Gastrocnemius medialis (tissue), 4 donors: ENCODE measurements at regions of chr15 and their contacts with region 1.

Region 1: DNA sequence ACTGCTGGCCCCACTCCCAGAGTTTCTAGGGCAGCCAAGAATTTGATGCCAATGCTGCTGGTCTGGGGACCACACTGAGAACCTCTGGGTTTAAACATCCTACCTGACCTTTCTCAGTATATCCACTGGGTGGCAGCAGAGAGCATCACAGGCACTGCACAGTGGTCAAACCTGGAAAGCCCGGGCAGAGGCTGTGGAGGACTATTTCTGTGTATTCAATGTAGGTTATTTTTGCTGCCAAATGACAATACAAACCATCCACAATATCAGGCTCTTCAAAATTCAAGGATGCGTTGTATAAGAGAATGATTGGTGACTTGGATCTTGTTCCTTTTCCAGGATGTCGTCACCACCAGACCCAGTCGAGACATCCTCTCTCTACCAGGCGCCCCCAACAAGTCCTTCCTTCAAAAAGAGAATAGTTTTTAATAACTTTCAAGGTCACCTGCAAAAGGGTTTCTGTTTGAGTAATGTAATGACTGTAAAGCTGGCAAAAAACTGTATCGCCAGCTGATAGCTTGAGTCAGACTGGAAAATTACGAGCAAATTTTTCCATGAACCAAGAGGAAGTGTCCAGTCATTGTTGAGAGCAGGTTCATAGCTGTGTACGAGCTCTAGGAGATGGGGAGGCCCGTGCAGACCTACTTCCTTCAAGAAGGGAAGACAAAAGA is 30.5 kb upstream of the MYZAP start:
- DNase-seq: peak; percentile 52 to 70
- ATAC-seq: peak; percentile 87 to 96
- H3K4me3 ChIP-seq: no peak overlapping the region
- H3K27ac ChIP-seq: peak overlapping the region in 3 of 4 donors; percentile 38 to 47 (median 41)
- H3K4me1 ChIP-seq: no peaks in the 10 kb centered on the region
- H3K27me3 ChIP-seq: no peaks in the 10 kb centered on the region
- CTCF ChIP-seq: peak; percentile 85 to 93 (median 90)
- POLR2A ChIP-seq: no peak

Region 2: GRCh38 chr15:57635300-57635909 is 74.2 kb after region 1 on chr15:
- in situ Hi-C with region 1: loop called in 1 of 4 experiments (anchors 10 kb)
- intact Hi-C with region 1: loop called (anchors 5 kb)
- DNase-seq: peak; percentile 81 to 83
- ATAC-seq: peak; percentile 92 to 93
- H3K4me3 ChIP-seq: no peak overlapping the region
- H3K27ac ChIP-seq: peak overlapping the region; percentile 79 to 92 (median 81)
- H3K4me1 ChIP-seq: peaks cover 22 to 32% of the 10 kb centered on the region in 2 donors
- H3K27me3 ChIP-seq: no peaks in the 10 kb centered on the region
- CTCF ChIP-seq: peak in 3 of 5 experiments; percentile 8 to 26 (median 21)
- POLR2A ChIP-seq: no peak

Region 3: GRCh38 chr15:57654153-57654852 is 93.1 kb after region 1 on chr15:
- in situ Hi-C with region 1: loop called in 3 of 4 experiments (anchors 5 to 25 kb)
- intact Hi-C with region 1: loop called (anchors 2 kb)
- DNase-seq: no peak
- ATAC-seq: peak; percentile 70 to 75
- H3K4me3 ChIP-seq: no peak overlapping the region
- H3K27ac ChIP-seq: no peak overlapping the region
- H3K4me1 ChIP-seq: peaks cover 0 to 4% of the 10 kb centered on the region in 2 donors
- H3K27me3 ChIP-seq: no peaks in the 10 kb centered on the region
- CTCF ChIP-seq: no peak
- POLR2A ChIP-seq: no peak

Region 4: GRCh38 chr15:57706405-57707209 is 145.4 kb after region 1 on chr15 and contains the start of gene POLR2M:
- in situ Hi-C with region 1: no loop called
- intact Hi-C with region 1: loop called (anchors 5 kb)
- DNase-seq: peak; percentile 88 to 95
- ATAC-seq: peak; percentile 94 to 97
- H3K4me3 ChIP-seq: peak within 1 kb of the TSS; percentile 69 to 97 (median 88)
- H3K27ac ChIP-seq: peak within 1 kb of the TSS; percentile 90 to 96 (median 94)
- H3K4me1 ChIP-seq: peaks cover 28% of the 10 kb centered on the region in 2 donors
- H3K27me3 ChIP-seq: no peaks in the 10 kb centered on the region
- CTCF ChIP-seq: no peak
- POLR2A ChIP-seq: peak; percentile 77 to 80
- total RNA-seq, gene POLR2M: 40.3 to 145 (median 79.5) TPM

Region 5: DNA sequence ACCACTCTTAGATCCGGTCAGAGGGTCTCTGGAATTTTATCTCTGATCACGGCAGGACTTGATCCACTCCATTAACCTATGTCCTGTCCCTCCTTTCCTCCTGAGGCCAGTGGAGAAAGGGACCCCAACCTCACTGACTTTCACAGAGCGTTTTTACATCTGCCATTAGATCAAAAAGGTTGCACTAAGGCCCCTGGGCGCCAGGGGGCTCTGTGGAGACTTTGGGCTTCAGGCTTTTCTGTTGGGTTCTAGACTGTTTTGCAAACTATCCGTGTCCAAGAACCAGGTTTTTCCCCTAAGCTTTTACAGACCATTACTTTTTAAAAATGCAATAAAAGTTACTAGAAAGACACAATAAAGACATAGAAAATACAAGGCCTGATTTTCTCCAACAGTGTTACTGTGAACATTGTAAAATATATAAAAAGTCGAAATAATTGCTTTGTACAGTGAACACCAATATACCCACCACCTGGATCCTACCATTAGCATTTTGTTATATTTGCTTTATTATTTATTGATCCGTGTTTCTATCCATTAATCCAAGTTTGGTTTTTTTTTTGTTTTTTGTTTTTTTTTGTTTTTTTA is 305.1 kb after region 1 on chr15:
- in situ Hi-C with region 1: loop called (anchors 10 to 25 kb)
- intact Hi-C with region 1: loop called (anchors 2 kb)
- DNase-seq: no peak
- ATAC-seq: no peak
- H3K4me3 ChIP-seq: no peak overlapping the region
- H3K27ac ChIP-seq: no peak overlapping the region
- H3K4me1 ChIP-seq: no peaks in the 10 kb centered on the region
- H3K27me3 ChIP-seq: no peaks in the 10 kb centered on the region
- CTCF ChIP-seq: peak in 3 of 5 experiments; percentile 44 to 64 (median 55)
- POLR2A ChIP-seq: no peak

Region 6: GRCh38 chr15:58307313-58307961 is 746.3 kb after region 1 on chr15:
- in situ Hi-C with region 1: no loop called
- intact Hi-C with region 1: no loop called
- DNase-seq: no peak
- ATAC-seq: no peak
- H3K4me3 ChIP-seq: no peak overlapping the region
- H3K27ac ChIP-seq: no peak overlapping the region
- H3K4me1 ChIP-seq: peaks cover 0 to 6% of the 10 kb centered on the region in 2 donors
- H3K27me3 ChIP-seq: no peaks in the 10 kb centered on the region
- CTCF ChIP-seq: no peak
- POLR2A ChIP-seq: no peak